PC-9 (cell line): ENCODE measurements at regions of chr20 and their contacts with region 1.

Region 1: DNA sequence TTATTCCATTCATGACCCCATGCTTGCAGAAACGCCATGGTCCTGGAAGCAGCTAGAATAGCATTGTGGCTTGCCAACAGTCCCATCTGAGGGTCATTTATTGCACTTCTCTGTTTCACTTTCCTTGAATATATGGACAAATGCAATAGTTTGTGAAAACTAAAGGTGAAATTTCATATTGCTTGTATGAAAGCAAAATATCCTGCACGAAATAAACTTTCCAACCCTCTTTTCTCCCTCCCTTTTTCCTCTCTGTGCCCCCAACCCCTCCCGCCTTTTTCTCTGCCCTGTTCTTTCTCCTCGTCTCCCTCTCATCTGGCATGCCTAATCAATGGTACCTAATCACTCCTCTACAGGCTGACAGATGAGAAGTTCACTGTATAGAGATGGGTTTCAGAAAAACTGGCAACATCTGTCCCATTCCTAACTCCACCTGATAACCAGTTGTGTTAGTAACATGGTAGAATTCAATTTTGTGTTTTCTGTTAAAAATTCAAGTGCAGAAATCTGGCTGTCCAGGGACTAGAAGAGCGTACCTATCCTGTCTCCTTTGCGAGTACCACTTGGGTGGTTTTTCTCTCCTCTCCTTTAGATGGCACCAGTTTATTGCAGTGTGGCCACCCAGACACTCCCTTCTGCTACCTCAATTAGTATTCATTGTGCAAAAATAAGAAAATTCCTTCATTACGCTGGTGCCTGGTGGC is 198.6 kb downstream of the FOXA2 start:
- DNase-seq: peak in 1 of 2 experiments; percentile 7
- H3K4me3 ChIP-seq: no peak overlapping the region
- H3K27ac ChIP-seq: no peak overlapping the region
- H3K4me1 ChIP-seq: peaks cover 46% of the 10 kb centered on the region
- H3K27me3 ChIP-seq: no peaks in the 10 kb centered on the region
- CTCF ChIP-seq: peak; percentile 28; the same call in 1 of the 2 replicates

Region 2: DNA sequence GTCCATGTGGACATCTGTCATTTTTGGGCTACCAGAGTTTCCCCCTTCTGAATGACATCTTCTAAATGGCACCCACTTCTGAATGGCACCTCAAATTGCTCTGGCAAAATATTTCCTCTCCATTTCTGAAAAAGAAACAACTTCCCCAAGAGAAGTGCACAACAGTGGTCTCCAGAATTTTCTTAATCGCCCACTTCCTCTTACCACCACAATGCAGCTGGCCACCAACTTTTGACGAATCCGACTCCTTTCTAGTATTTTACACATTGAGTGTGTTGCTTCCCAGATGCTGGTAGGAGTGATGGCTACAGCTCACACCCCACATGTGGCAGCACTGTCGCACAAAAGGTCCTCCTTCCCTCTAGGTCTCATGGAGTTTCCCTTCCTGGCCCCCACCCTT is 17.5 kb before region 1 on chr20:
- CTCF ChIA-PET with region 1: no interaction called
- POLR2A ChIA-PET with region 1: no interaction called
- intact Hi-C with region 1: no loop called
- DNase-seq: no peak
- H3K4me3 ChIP-seq: no peak overlapping the region
- H3K27ac ChIP-seq: no peak overlapping the region
- H3K4me1 ChIP-seq: no peaks in the 10 kb centered on the region
- H3K27me3 ChIP-seq: no peaks in the 10 kb centered on the region
- CTCF ChIP-seq: no peak

Region 3: GRCh38 chr20:22403632-22404361 is 18.0 kb after region 1 on chr20:
- CTCF ChIA-PET with region 1: no interaction called
- POLR2A ChIA-PET with region 1: interaction called, 3 read pairs
- intact Hi-C with region 1: loop called (anchors 1 kb)
- DNase-seq: peak in 1 of 2 experiments; percentile 3
- H3K4me3 ChIP-seq: no peak overlapping the region
- H3K27ac ChIP-seq: no peak overlapping the region
- H3K4me1 ChIP-seq: peaks cover 30% of the 10 kb centered on the region
- H3K27me3 ChIP-seq: no peaks in the 10 kb centered on the region
- CTCF ChIP-seq: no peak

Region 4: DNA sequence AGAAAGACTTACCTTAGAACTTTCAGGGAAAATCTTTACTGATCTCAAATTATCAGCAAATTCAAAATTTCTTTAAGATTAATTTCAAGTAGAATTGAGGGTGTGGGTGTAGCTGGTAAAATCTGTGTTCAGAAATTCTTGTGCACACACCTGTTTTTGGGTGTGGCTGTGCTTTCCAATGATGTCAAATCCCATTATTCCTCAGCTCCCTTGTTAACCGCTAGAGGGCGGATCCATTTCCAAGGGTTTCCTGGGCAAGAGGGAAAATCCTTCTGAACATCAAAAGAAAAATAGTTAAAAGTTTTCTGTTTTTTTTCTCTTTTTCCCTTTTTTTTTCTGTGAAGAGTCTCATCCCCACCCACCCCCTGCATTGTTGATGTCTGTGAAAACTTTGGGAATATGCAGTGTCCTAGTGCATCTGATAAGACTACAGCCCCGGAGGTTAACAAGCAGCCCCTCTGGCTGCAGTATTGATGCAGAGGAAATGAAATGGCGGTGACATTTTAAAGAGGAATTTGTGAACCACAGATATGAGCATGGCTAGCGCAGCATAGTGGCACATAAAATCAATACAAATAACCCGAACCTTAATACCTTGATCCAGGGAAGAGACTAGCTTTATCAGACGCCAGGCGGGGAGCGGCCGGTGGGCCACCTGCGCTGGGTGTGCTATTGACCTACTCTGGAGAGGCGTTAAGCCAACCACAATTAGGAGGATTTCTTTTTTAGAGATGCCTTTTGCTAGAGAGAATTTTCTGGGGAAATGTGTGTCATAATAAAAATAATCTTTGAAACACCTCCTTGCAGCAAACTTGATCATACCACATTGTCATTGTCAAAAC is 67.7 kb after region 1 on chr20:
- CTCF ChIA-PET with region 1: no interaction called
- POLR2A ChIA-PET with region 1: no interaction called
- intact Hi-C with region 1: loop called (anchors 10 kb)
- DNase-seq: peak in 1 of 2 experiments; percentile 45
- H3K4me3 ChIP-seq: no peak overlapping the region
- H3K27ac ChIP-seq: no peak overlapping the region
- H3K4me1 ChIP-seq: no peaks in the 10 kb centered on the region
- H3K27me3 ChIP-seq: no peaks in the 10 kb centered on the region
- CTCF ChIP-seq: peak; percentile 81

Region 5: GRCh38 chr20:22586645-22587310 is 201.0 kb after region 1 on chr20:
- CTCF ChIA-PET with region 1: no interaction called
- POLR2A ChIA-PET with region 1: no interaction called
- intact Hi-C with region 1: loop called (anchors 5 kb)
- DNase-seq: no peak
- H3K4me3 ChIP-seq: no peak overlapping the region
- H3K27ac ChIP-seq: no peak overlapping the region
- H3K4me1 ChIP-seq: no peaks in the 10 kb centered on the region
- H3K27me3 ChIP-seq: no peaks in the 10 kb centered on the region
- CTCF ChIP-seq: peak; percentile 64

Region 6: GRCh38 chr20:22684072-22684762 is 298.5 kb after region 1 on chr20:
- CTCF ChIA-PET with region 1: no interaction called
- POLR2A ChIA-PET with region 1: no interaction called
- intact Hi-C with region 1: loop called (anchors 1 kb)
- DNase-seq: peak; percentile 56 to 68
- H3K4me3 ChIP-seq: no peak overlapping the region
- H3K27ac ChIP-seq: no peak overlapping the region
- H3K4me1 ChIP-seq: no peaks in the 10 kb centered on the region
- H3K27me3 ChIP-seq: no peaks in the 10 kb centered on the region
- CTCF ChIP-seq: peak; percentile 92

Region 7: DNA sequence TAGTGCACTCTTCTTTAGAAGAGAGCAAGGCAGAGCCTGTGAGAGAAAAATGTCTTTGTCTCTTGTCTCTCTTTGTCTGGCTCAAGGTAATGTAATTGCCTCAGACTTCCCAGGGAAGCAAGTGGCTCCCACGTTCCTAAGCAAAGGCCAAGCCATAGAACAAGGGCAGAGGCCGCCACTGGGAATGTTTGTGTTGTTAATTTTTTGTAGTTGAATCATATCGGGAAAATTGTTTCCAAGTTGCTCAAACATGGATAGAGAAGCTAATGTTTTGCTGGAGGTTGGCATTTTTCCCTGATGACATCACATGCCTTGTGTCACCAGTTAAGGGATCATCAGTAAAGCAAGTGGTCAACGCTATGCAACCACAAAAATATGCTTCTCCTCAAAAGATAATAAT is 410.1 kb after region 1 on chr20:
- CTCF ChIA-PET with region 1: no interaction called
- POLR2A ChIA-PET with region 1: no interaction called
- intact Hi-C with region 1: no loop called
- DNase-seq: peak; percentile 74 to 92
- H3K4me3 ChIP-seq: no peak overlapping the region
- H3K27ac ChIP-seq: peak overlapping the region; percentile 93
- H3K4me1 ChIP-seq: peaks cover 58% of the 10 kb centered on the region
- H3K27me3 ChIP-seq: no peaks in the 10 kb centered on the region
- CTCF ChIP-seq: no peak